CD8-positive, alpha-beta memory T cell (primary cell): ENCODE measurements at regions of chr12 and their contacts with region 1.

Region 1: GRCh38 chr12:104381731-104382480 is 74.8 kb upstream of the CHST11 start:
- DNase-seq: peak; percentile 70 to 85 (median 70)
- H3K4me3 ChIP-seq: no peak overlapping the region
- H3K4me3 Mint-ChIP-seq: peak overlapping the region in 2 of 7 donors; percentile 25 to 28
- H3K27ac ChIP-seq: no peak overlapping the region
- H3K27ac Mint-ChIP-seq: peak overlapping the region in 3 of 8 donors; percentile 0 to 26 (median 8)
- H3K4me1 ChIP-seq: no peaks in the 10 kb centered on the region
- H3K4me1 Mint-ChIP-seq: peaks cover 9 to 13% (median 11%) of the 10 kb centered on the region in 3 donors
- H3K27me3 ChIP-seq: no peaks in the 10 kb centered on the region
- H3K27me3 Mint-ChIP-seq: peaks cover 5 to 10% of the 10 kb centered on the region in 2 donors

Region 2: GRCh38 chr12:104371043-104371870 is 10.6 kb before region 1 on chr12:
- CTCF ChIA-PET with region 1: interaction called, 16 read pairs
- POLR2A ChIA-PET with region 1: no interaction called
- DNase-seq: no peak
- H3K4me3 ChIP-seq: no peak overlapping the region
- H3K4me3 Mint-ChIP-seq: no peak overlapping the region
- H3K27ac ChIP-seq: no peak overlapping the region
- H3K27ac Mint-ChIP-seq: peak overlapping the region in 4 of 8 donors; percentile 11 to 70 (median 54)
- H3K4me1 ChIP-seq: peaks cover 8% of the 10 kb centered on the region
- H3K4me1 Mint-ChIP-seq: peaks cover 11 to 16% (median 12%) of the 10 kb centered on the region in 3 donors
- H3K27me3 ChIP-seq: no peaks in the 10 kb centered on the region
- H3K27me3 Mint-ChIP-seq: peaks cover 0 to 2% of the 10 kb centered on the region in 2 donors

Region 3: GRCh38 chr12:104630230-104630670 is 248.3 kb after region 1 on chr12:
- CTCF ChIA-PET with region 1: interaction called, 10 read pairs
- POLR2A ChIA-PET with region 1: no interaction called
- DNase-seq: no peak
- H3K4me3 ChIP-seq: no peak overlapping the region
- H3K4me3 Mint-ChIP-seq: no peak overlapping the region
- H3K27ac ChIP-seq: no peak overlapping the region
- H3K27ac Mint-ChIP-seq: peak overlapping the region in 2 of 8 donors; percentile 12 to 17
- H3K4me1 ChIP-seq: no peaks in the 10 kb centered on the region
- H3K4me1 Mint-ChIP-seq: peaks cover 66 to 90% (median 86%) of the 10 kb centered on the region in 3 donors
- H3K27me3 ChIP-seq: no peaks in the 10 kb centered on the region
- H3K27me3 Mint-ChIP-seq: no peaks in the 10 kb centered on the region

Region 4: DNA sequence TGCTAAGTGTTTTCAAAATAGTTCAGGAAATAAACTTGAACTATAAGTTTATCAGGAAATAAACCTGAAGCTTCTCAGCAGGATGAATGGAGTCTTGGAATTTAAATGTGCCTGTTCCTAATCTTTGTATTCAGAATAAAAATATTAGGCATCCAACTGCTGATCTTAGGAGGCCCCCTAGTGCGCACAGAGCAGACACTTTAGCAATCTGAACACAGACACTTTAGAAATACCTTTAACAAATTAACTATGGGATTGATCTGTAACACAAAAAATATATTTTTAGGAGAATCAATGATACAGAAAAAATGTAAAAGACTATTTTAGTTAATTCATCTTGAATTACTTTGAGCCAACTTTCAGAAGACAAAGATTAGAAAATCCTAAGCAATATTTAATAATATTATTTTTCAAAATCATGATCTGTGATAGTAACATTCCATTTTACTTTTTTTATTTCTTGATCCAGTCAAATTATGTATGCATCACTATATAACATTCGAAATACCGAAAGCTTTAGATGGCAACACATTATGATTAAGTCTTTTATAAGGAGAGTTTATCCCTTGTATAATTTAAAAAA is 495.3 kb after region 1 on chr12:
- CTCF ChIA-PET with region 1: interaction called, 25 read pairs
- POLR2A ChIA-PET with region 1: no interaction called
- DNase-seq: peak; percentile 3 to 48 (median 15)
- H3K4me3 ChIP-seq: no peak overlapping the region
- H3K4me3 Mint-ChIP-seq: no peak overlapping the region
- H3K27ac ChIP-seq: no peak overlapping the region
- H3K27ac Mint-ChIP-seq: no peak overlapping the region
- H3K4me1 ChIP-seq: no peaks in the 10 kb centered on the region
- H3K4me1 Mint-ChIP-seq: no peaks in the 10 kb centered on the region
- H3K27me3 ChIP-seq: no peaks in the 10 kb centered on the region
- H3K27me3 Mint-ChIP-seq: peaks cover 0 to 2% of the 10 kb centered on the region in 2 donors

Region 5: GRCh38 chr12:105053116-105053572 is 671.2 kb after region 1 on chr12:
- CTCF ChIA-PET with region 1: interaction called, 70 read pairs
- POLR2A ChIA-PET with region 1: no interaction called
- DNase-seq: peak; percentile 52 to 80 (median 60)
- H3K4me3 ChIP-seq: no peak overlapping the region
- H3K4me3 Mint-ChIP-seq: no peak overlapping the region
- H3K27ac ChIP-seq: no peak overlapping the region
- H3K27ac Mint-ChIP-seq: no peak overlapping the region
- H3K4me1 ChIP-seq: no peaks in the 10 kb centered on the region
- H3K4me1 Mint-ChIP-seq: peaks cover 0 to 5% (median 0%) of the 10 kb centered on the region in 3 donors
- H3K27me3 ChIP-seq: no peaks in the 10 kb centered on the region
- H3K27me3 Mint-ChIP-seq: peaks cover 0 to 7% of the 10 kb centered on the region in 2 donors